ENCODE measurements at regions of chr1 and their contacts with region 1.

Region 1: DNA sequence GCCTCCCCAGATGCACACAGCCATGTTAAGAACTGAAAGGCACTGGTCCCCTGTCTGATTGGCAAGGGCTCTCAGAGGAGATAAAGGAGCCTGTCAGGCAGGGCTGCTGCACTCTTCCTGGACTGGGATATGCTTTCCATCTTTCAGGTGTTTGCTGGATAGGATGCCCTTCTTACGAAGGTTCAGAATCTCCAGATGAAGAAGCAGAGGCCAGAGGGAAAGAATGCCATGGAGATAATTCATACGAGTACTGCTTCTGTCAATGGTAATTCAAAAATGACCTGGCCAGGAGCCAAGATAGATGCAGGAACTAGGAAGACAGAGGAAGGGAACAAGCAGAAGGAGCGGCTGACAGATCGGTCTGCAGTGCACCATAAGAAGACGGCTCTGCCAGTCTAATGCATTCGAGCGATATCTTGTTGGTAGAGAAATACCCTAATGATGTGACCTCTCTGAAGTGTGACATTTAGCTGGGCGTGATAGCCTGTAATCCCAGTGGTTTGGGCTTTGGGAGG is 16.6 kb upstream of the ATP2B4 start:
- DNase-seq: no peak
- H3K4me3 ChIP-seq: no peak overlapping the region
- H3K27ac ChIP-seq: no peak overlapping the region
- H3K4me1 ChIP-seq: peaks cover 15% of the 10 kb centered on the region
- H3K27me3 ChIP-seq: no peaks in the 10 kb centered on the region
- CTCF ChIP-seq: no peak
- POLR2A ChIP-seq: no peak

Region 2: GRCh38 chr1:203512830-203513611 is 97.0 kb before region 1 on chr1:
- CTCF ChIA-PET with region 1: no interaction called
- POLR2A ChIA-PET with region 1: no interaction called
- dilution Hi-C with region 1: no loop called
- intact Hi-C with region 1: loop called (anchors 5 kb)
- DNase-seq: peak; percentile 85
- H3K4me3 ChIP-seq: no peak overlapping the region
- H3K27ac ChIP-seq: peak overlapping the region; percentile 83
- H3K4me1 ChIP-seq: peaks cover 35% of the 10 kb centered on the region
- H3K27me3 ChIP-seq: no peaks in the 10 kb centered on the region
- CTCF ChIP-seq: no peak
- POLR2A ChIP-seq: no peak

Region 3: DNA sequence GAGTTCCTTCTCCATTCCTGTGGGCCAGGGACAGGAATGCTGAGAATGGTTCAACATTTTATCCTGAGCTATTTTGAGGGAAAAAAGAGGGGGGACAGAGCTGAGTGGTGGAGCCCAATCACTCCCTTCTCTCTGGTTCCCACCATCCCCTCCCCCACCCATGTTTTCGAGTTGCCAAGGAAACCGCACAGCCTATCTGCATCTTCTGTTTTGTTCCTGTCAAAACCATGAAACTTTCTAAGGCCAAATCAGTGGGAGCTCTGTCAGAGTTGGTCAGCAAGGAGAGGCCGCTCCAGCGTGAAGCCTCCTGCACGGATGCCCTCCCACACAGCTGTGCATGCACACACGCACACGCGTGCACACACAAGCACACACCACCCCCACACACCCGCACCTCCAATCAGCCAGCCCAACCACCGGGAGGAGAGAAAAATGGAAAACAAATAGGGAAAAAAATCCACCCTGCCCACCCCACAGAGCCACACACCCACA is 37.9 kb before region 1 on chr1:
- CTCF ChIA-PET with region 1: no interaction called
- POLR2A ChIA-PET with region 1: no interaction called
- dilution Hi-C with region 1: no loop called
- intact Hi-C with region 1: no loop called
- DNase-seq: no peak
- H3K4me3 ChIP-seq: no peak overlapping the region
- H3K27ac ChIP-seq: no peak overlapping the region
- H3K4me1 ChIP-seq: no peaks in the 10 kb centered on the region
- H3K27me3 ChIP-seq: peaks cover 0 to 4% of the 10 kb centered on the region in 2 experiments
- CTCF ChIP-seq: no peak
- POLR2A ChIP-seq: no peak

Region 4: GRCh38 chr1:203776636-203777035 is 166.6 kb after region 1 on chr1:
- CTCF ChIA-PET with region 1: no interaction called
- POLR2A ChIA-PET with region 1: interaction called, 11 read pairs
- dilution Hi-C with region 1: no loop called
- intact Hi-C with region 1: no loop called
- DNase-seq: no peak
- H3K4me3 ChIP-seq: no peak overlapping the region
- H3K27ac ChIP-seq: no peak overlapping the region
- H3K4me1 ChIP-seq: peaks cover 3% of the 10 kb centered on the region
- H3K27me3 ChIP-seq: no peaks in the 10 kb centered on the region
- CTCF ChIP-seq: peak in 1 of 2 donors; percentile 9
- POLR2A ChIP-seq: no peak

Measured in endothelial cell of umbilical vein (primary cell).